Activated CD4-positive, alpha-beta T cell treated with anti-CD3 and anti-CD28 coated beads, Interleukin-2, amount 10 ng/mL, durations not matched to agents 24 days and 14 days (primary cell): ENCODE measurements at regions of chr1 and their contacts with region 1.

Region 1: GRCh38 chr1:225999227-225999911 is at the start of gene SDE2:
- DNase-seq: peak; percentile 100
- H3K4me3 Mint-ChIP-seq: peak within 1 kb of the TSS; percentile 97
- H3K27ac Mint-ChIP-seq: peak within 1 kb of the TSS; percentile 99
- H3K4me1 Mint-ChIP-seq: peaks cover 53% of the 10 kb centered on the region
- H3K27me3 Mint-ChIP-seq: no peaks in the 10 kb centered on the region
- total RNA-seq, gene SDE2: 26.9 and 27.1 TPM in 2 replicates

Region 2: DNA sequence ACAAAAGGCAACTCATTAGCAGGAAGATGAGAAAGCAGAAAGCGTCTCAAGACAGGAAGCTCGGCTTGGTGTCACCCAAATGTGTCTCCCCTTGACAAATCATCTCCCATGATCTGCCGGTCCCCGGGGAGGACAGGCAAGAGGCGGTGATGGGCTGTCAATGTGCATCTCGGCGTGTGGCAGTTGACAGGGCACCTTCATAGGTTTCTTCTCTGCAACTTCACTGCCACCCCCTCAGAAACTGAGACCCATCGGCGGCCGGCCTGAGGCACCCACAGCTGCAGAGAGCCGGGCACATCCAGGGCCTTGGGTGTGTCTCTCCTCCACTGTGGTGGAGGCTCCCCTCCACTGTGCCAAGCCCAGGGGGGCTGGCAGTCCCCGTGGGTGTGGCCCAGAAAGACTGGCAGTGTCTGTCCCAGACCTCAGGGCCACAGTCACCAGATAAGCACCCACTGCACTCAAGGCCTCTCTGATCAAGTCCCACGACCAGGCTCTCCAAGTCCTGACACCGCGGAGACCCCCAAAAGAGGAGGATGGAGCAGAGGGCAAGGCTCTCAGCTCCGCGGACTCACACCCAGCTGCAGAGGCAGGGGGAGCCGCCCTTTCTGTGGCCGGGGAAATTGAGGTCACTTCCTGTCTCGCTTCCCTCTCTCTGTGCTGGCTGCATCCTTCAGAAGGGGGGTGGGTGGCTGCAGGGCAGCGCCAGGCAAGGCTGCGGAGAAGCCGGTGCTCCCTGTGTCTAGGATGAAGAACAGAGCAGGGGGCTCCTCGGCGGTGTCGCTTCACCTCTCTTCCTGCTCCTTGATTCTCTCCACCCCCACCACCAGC is 532.0 kb before region 1 on chr1:
- intact Hi-C with region 1: loop called (anchors 2 kb)
- DNase-seq: peak; percentile 95
- H3K4me3 Mint-ChIP-seq: peak overlapping the region; percentile 94
- H3K27ac Mint-ChIP-seq: peak overlapping the region; percentile 98
- H3K4me1 Mint-ChIP-seq: peaks cover 39% of the 10 kb centered on the region
- H3K27me3 Mint-ChIP-seq: no peaks in the 10 kb centered on the region

Region 3: GRCh38 chr1:225923692-225924555 is 75.4 kb before region 1 on chr1 and contains the start of gene PYCR2:
- intact Hi-C with region 1: loop called (anchors 1 kb)
- DNase-seq: peak; percentile 99
- H3K4me3 Mint-ChIP-seq: peak within 1 kb of the TSS; percentile 97
- H3K27ac Mint-ChIP-seq: peak within 1 kb of the TSS; percentile 95
- H3K4me1 Mint-ChIP-seq: peaks cover 39% of the 10 kb centered on the region
- H3K27me3 Mint-ChIP-seq: no peaks in the 10 kb centered on the region
- total RNA-seq, gene PYCR2: 144 and 150 TPM in 2 replicates

Region 4: GRCh38 chr1:226186124-226187018 is 187.0 kb after region 1 on chr1 and contains the start of gene ACBD3:
- intact Hi-C with region 1: loop called (anchors 2 kb)
- DNase-seq: peak; percentile 96
- H3K4me3 Mint-ChIP-seq: peak within 1 kb of the TSS; percentile 97
- H3K27ac Mint-ChIP-seq: peak within 1 kb of the TSS; percentile 92
- H3K4me1 Mint-ChIP-seq: peaks cover 29% of the 10 kb centered on the region
- H3K27me3 Mint-ChIP-seq: no peaks in the 10 kb centered on the region
- total RNA-seq, gene ACBD3: 21.8 and 23.9 TPM in 2 replicates